ENCODE measurements at regions of chr21 and their contacts with region 1.

Region 1: DNA sequence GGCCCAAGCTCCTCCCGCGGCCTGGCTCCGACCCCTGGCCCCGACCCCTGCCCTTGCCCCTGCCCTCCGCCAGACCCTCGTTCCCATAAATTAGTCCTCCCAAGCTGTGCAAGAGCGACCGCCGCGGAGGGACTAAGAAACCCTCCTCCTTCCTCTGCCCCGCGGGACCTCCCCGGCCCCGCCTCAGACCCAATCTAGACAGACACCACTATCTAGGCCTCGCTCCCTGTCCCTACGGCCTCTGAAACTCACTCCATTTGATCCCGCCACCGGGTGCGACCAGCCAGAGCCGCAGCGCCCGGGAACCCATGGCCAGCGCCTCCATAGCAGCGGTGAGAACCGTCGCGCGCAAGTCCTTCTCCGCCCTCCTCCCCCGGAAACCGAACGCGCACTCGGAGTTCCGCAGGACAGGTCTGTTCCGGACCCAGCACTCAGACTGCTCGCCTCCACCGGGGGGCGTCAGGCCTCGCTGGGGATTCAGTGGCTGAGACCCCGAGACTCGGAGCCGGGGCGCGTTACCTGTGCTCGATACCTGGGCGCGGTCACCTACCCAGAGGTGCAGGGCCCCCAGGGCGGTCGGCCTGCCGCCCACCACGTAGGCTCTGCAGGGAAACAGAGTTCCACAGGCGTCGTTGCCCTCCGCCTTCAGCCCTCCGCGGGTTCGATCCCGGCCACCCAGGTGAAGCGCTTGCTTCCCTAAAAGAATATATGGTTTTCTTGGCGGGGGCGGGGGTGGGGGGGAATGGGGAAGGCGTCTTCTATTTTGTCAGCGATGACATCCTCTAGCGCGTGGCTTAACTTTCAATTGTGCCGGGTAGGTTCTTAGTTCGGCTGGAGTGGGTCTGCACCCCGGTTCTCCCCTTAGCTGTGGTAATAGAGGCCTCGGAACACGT is at the start of gene MRPL39:
- ATAC-seq: peak; percentile 94 to 97 (median 94)
- H3K4me3 ChIP-seq: peak within 1 kb of the TSS; percentile 59 to 96 (median 67)
- H3K27ac ChIP-seq: peak within 1 kb of the TSS; percentile 81 to 85
- H3K4me1 ChIP-seq: peaks cover 10 to 11% of the 10 kb centered on the region in 2 donors
- total RNA-seq, gene MRPL39: 25.2 to 49.7 (median 35.1) TPM

Region 2: GRCh38 chr21:25708467-25709065 is 101.2 kb after region 1 on chr21:
- in situ Hi-C with region 1: loop called in 6 of 9 experiments (anchors 5 to 25 kb)
- ATAC-seq: peak in 2 of 8 experiments; percentile 23 to 28
- H3K4me3 ChIP-seq: no peak overlapping the region
- H3K27ac ChIP-seq: no peak overlapping the region
- H3K4me1 ChIP-seq: no peaks in the 10 kb centered on the region

Region 3: GRCh38 chr21:25734904-25735645 is 127.7 kb after region 1 on chr21 and contains the starts of genes ATP5PF and GABPA:
- in situ Hi-C with region 1: loop called in 1 of 9 experiments (anchors 25 kb)
- ATAC-seq: peak; percentile 85 to 94 (median 92)
- H3K4me3 ChIP-seq: peak within 1 kb of the TSS; percentile 66 to 98 (median 87)
- H3K27ac ChIP-seq: peak within 1 kb of the TSS; percentile 99
- H3K4me1 ChIP-seq: peaks cover 10 to 23% of the 10 kb centered on the region in 2 donors
- total RNA-seq, gene ATP5PF: 146 to 302 (median 188) TPM
- total RNA-seq, gene GABPA: 17.4 to 35.8 (median 21.4) TPM

Region 4: DNA sequence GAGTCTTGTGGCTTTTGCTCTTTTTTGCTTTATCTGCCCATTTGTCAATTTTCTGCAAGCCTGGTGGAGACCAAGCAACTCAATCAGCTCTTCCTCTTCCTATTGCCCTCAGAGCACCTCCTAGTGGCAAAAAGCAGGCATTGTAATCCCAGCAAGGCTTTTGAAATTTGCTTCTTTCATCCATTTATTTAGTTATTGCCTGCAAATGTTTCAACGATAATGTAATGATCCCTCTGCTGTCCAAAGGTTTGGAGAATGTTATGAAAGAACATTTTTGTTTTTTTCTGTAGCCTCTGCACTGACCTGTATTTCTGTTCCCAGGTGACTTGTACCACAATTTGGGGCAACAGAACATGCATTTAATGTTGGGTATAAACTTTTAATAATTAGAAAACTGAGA is 255.2 kb after region 1 on chr21:
- in situ Hi-C with region 1: loop called in 1 of 9 experiments (anchors 25 kb)
- ATAC-seq: peak in 1 of 8 experiments; percentile 25
- H3K4me3 ChIP-seq: no peak overlapping the region
- H3K27ac ChIP-seq: no peak overlapping the region
- H3K4me1 ChIP-seq: peaks cover 14 to 37% of the 10 kb centered on the region in 2 donors

Region 5: GRCh38 chr21:26332867-26333266 is 725.5 kb after region 1 on chr21:
- in situ Hi-C with region 1: no loop called
- ATAC-seq: peak in 2 of 8 experiments; percentile 70 to 74
- H3K4me3 ChIP-seq: no peak overlapping the region
- H3K27ac ChIP-seq: no peak overlapping the region
- H3K4me1 ChIP-seq: no peaks in the 10 kb centered on the region

Region 6: GRCh38 chr21:26715878-26716506 is 1108.6 kb after region 1 on chr21:
- in situ Hi-C with region 1: loop called in 2 of 9 experiments (anchors 25 kb)
- ATAC-seq: peak; percentile 40 to 92 (median 73)
- H3K4me3 ChIP-seq: no peak overlapping the region
- H3K27ac ChIP-seq: no peak overlapping the region
- H3K4me1 ChIP-seq: peaks cover 0 to 7% of the 10 kb centered on the region in 2 donors

Region 7: DNA sequence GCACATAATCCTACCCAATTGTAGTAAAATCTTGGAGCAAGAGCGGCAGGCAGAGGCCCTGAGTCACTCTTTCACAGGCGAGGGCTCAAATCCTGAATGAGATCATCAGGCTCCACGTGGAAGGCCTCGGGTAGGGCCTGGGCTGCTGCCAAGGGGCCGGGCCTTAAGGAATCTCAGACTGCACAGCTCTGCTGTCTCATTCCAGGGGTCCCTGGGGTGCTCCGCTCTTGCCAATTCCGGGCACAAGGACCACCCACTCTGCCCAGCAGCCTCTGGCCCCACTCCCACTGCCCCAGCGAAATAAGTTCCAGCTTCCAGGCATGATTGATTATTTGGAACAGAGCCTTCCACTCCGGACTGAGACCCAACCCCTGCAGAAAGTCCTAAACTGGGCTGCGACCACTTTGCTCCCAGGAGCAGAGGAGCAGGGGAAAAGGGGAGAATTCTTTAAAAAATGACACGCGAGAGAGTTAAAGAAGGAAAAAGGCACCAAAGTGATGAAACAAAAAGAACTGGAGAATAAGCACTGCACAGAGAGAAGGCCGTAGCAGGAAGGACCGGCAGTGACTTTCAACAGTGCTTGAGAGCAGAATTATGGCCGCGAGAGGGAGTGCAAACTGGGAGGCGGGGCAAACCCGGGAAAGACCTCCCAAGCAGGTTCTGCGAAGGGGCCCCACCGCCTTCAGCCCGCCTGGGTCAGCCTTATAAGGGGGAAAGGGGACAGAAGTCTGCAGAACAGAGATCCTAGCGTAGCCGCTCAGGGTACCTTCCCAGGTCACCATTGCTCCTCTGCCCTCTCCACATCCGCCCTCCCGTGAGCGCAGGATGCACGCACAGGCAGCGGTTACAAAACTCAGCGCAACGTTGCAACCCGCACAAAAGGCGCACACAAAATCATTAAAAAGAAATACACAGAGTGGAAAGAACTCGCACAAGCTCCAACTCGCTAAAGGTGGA is 1235.9 kb after region 1 on chr21:
- in situ Hi-C with region 1: loop called in 1 of 9 experiments (anchors 25 kb)
- ATAC-seq: peak; percentile 38 to 64 (median 54)
- H3K4me3 ChIP-seq: peak overlapping the region; percentile 47 to 89 (median 75)
- H3K27ac ChIP-seq: peak overlapping the region; percentile 90
- H3K4me1 ChIP-seq: peaks cover 8% of the 10 kb centered on the region in 2 donors

Measured in motor neuron (in vitro differentiated cells).